GM10248 (cell line): ENCODE measurements at regions of chr1 and their contacts with region 1.

Region 1: DNA sequence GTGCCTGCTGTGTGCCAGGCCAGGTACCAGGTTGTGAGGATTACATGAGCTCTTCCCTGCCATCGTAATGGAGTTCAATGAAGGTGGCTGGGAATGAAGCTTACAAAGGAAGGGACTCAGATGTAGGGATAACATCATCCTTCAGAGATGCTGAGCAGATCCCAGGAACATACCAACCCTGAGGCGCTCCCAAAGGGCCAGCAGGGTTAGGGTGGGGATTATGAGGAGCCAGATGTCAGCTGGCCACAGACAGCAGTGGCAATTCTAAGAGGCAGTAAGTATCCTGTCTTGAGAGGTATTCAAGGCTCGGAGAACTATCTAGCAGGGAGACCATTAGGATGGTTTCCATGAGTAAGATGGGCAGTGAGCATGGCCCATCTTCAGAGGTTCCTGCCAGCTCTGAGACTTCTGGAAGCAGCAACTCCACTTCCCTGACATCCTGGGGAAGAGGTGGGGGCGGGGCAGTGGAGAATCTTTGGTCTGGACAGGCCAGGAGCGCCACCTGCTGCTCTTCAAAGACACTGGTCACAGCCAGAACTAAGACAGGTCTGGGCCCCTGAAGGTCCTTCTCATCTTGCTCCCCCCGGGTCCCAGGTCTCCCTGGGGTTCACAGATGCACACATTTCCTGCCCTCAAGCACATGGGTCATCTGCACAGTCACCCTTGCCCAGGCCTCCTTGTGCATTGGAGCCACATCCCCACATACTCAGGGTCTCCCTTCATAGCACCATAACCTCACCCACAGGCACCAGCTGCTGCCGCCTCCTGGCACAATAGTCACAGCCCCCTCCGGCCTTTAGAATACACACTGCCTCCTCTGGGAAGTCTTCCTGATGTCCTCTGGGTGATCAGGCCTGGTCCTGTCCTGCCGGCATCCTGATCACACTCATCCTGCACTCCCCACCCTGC is 2.7 kb upstream of the SDC3 start:
- DNase-seq: peak; percentile 78
- CTCF ChIP-seq: peak; percentile 74

Region 2: GRCh38 chr1:30816211-30817076 is 94.9 kb before region 1 on chr1:
- CTCF ChIA-PET with region 1: interaction called, 12 read pairs
- POLR2A ChIA-PET with region 1: no interaction called
- DNase-seq: no peak
- CTCF ChIP-seq: no peak